Prostate gland (tissue), 2 donors: ENCODE measurements at regions of chr20 and their contacts with region 1.

Region 1: DNA sequence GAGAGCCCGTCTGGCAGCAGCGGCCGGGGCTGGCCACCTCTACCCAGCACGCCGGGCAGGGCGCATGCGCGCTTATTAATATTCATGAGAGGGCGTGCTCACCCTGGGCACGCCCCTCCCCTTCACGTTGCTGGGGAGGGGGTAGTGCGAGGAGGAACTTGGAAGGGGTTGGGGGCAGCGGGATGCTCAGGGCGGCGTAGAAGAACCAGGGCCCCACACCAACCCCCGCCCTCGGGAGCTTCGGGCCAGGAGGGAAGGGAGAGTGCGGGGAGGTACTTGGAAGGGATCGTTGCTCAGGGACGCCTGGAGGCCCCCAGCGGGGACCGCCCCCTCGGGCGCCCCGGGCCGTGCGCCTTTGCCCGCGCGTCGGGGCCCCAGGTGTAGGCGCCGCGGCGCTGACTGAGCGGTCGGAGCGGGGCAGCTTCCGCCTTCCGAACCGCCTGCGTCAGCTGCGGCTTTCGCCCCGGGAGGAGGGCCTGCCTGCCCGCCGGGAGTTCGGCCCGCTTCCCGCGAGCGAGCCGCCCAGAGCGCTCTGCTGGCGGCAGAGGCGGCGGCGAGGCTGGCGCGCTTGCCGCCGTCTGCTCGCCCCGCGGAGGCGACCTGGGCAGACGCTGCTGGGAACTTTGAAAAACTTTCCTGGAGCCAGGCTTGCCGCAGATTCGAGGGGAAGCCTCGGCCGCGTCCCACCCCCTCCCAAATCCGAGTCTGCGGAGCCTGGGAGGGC is at the start of gene JAG1:
- DNase-seq: peak; percentile 97
- H3K4me3 ChIP-seq: peak within 1 kb of the TSS; percentile 86 to 91
- H3K27ac ChIP-seq: peak within 1 kb of the TSS; percentile 99 to 100
- H3K4me1 ChIP-seq: no peaks in the 10 kb centered on the region
- H3K27me3 ChIP-seq: no peaks in the 10 kb centered on the region
- CTCF ChIP-seq: no peak
- POLR2A ChIP-seq: peak; percentile 95
- total RNA-seq, gene JAG1: 46.5 to 72.3 TPM

Region 2: DNA sequence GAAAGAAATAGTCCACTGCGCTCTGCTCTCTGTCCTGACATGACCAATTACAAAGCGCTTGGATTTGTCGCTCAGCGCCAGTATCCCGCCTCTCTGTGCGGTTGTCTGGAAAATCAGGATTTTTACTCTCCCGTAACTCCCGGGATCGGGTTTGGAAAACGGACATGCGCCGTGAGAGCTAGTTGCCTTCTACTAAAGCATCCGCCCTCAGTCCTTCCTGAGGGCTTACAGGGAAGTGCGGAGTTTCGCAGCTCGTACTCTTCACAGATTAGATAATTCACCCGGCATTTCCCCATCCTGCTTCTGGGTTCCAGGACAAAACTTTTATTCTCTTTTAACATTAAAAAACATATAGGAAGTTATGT is 239.7 kb before region 1 on chr20:
- intact Hi-C with region 1: loop called (anchors 2 kb)
- DNase-seq: peak; percentile 94
- H3K4me3 ChIP-seq: peak overlapping the region; percentile 77 to 83
- H3K27ac ChIP-seq: peak overlapping the region; percentile 93
- H3K4me1 ChIP-seq: peaks cover 5% of the 10 kb centered on the region
- H3K27me3 ChIP-seq: no peaks in the 10 kb centered on the region
- CTCF ChIP-seq: no peak
- POLR2A ChIP-seq: peak; percentile 80

Region 3: GRCh38 chr20:10508468-10509251 is 165.5 kb before region 1 on chr20:
- intact Hi-C with region 1: loop called (anchors 5 kb)
- DNase-seq: peak; percentile 46
- H3K4me3 ChIP-seq: no peak overlapping the region
- H3K27ac ChIP-seq: peak overlapping the region; percentile 77 to 82
- H3K4me1 ChIP-seq: peaks cover 34% of the 10 kb centered on the region
- H3K27me3 ChIP-seq: no peaks in the 10 kb centered on the region
- CTCF ChIP-seq: no peak
- POLR2A ChIP-seq: no peak

Region 4: DNA sequence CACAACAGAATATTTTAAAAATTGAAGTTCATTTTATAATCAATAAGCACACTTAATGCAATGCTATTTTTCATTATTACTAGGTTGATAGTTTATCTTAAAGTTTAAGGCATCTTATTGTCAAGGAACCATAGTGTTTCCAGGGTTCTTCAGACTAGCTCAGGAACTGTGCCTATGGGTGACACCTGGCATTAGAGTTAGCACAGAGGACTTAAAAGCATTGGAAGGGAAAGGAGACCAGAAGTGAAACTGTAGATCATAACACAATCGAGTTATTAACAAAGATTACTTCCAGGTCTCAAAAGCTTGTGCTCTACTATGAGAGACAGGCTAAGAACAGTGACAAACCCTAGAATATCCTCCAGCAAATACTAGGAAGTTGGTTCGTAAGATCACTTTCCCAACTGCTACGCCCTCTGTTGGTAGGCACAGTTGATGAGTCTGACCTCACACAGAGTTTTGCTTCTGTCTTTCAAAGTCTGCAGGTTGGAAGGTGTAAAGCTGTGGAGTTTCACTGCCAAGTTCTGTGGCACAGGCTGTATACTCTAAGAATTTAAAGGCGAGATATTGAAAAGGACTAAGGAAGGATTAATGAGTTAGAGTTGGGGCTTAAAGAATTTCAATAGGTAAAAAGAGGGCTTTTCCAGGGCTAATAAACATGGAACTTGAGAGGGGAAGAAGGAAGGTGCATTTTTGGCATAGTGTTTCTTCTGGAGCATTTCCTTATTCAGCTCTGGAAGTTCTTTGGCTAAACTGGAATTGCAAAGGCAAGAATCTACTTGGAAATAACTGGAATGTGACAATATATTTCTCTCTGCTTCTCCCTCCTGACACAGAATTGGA is 531.0 kb after region 1 on chr20:
- intact Hi-C with region 1: loop called (anchors 10 kb)
- DNase-seq: peak; percentile 72
- H3K4me3 ChIP-seq: no peak overlapping the region
- H3K27ac ChIP-seq: peak overlapping the region in 1 of 2 donors; percentile 6
- H3K4me1 ChIP-seq: peaks cover 3% of the 10 kb centered on the region
- H3K27me3 ChIP-seq: no peaks in the 10 kb centered on the region
- CTCF ChIP-seq: peak; percentile 20 to 76 (median 70)
- POLR2A ChIP-seq: no peak

Region 5: DNA sequence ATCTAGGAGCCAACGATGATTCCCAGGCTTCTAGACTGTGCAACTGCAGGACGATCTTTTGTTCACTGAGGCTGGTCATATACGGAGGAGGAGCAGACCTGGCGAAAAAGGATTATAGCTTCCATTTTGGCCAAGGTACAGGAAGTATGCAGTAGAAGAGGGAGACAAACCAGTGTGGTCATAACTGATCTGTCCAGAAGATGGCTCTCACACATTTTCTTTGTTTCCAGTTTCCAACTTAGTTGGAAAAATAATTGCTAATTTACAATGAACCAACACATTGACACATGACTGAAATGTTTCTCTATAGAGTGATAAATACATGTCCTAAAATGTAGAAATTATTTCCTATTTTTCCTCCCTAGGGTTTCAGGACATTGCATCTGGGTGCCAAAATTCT is 879.5 kb after region 1 on chr20:
- intact Hi-C with region 1: loop called (anchors 5 kb)
- DNase-seq: no peak
- H3K4me3 ChIP-seq: no peak overlapping the region
- H3K27ac ChIP-seq: no peak overlapping the region
- H3K4me1 ChIP-seq: no peaks in the 10 kb centered on the region
- H3K27me3 ChIP-seq: no peaks in the 10 kb centered on the region
- CTCF ChIP-seq: peak in 1 of 4 experiments; percentile 23
- POLR2A ChIP-seq: no peak